ENCODE measurements at regions of chr2 and their contacts with region 1.

Region 1: DNA sequence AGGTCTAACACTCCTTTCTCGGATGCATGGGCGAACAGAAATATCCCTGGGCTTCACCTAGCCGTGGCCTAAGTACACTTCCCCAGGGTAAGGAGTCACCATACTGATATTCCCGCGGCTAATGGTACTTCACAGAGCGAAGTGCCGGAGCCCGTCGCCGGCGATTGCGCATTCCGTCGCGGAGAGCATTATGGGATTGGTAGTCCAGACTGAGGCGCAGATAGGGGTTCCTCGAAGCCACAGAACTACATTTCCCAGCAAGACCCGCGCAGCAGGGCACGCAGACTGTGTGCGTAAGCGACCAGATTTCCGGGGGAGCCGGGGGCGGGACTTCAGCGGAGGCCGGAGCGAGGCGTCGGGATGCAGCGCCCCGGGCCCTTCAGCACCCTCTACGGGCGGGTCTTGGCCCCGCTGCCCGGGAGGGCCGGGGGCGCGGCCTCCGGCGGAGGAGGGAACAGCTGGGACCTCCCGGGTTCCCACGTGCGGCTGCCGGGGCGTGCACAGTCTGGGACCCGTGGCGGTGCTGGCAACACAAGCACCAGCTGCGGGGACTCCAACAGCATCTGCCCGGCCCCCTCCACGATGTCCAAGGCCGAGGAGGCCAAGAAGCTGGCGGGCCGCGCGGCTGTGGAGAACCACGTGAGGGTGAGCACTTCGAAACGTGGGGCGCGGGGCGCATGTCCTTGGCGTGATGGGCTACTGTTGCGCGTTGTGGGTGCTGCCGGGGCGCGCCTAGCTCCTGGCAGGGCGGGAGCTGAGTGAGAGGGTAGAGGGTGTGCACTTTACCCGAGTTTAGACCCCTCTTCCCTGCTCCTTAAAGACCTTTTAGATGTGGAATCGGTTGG is at the start of gene RPIA:
- DNase-seq: peak; percentile 99
- H3K4me3 ChIP-seq: peak within 1 kb of the TSS; percentile 44 to 83 (median 73)
- H3K27ac ChIP-seq: peak within 1 kb of the TSS; percentile 59
- H3K4me1 ChIP-seq: peaks cover 13% of the 10 kb centered on the region
- H3K27me3 ChIP-seq: no peaks in the 10 kb centered on the region
- CTCF ChIP-seq: peak; percentile 71 to 76
- POLR2A ChIP-seq: peak; percentile 61
- total RNA-seq, gene RPIA: 29.8 and 30.3 TPM in 2 replicates

Region 2: DNA sequence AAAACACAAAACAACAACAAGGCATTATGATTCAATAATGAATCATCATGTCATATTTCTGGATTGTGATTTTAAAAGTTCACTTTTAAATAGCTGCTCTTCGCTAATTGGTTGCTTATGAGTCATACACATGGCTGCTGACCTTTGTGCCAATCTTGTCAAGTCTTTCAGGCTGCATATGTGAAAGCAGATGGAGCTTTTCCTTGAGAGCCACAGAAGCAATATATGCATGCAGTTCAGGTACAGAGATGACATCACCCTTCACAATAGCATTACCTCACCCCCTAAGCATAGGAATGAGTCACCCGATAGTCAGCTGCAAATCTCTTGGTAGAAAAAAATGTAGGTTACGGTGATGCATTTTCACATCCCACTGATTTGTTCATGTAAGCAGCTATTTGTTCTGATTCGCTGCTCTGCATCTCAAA is 91.5 kb before region 1 on chr2:
- CTCF ChIA-PET with region 1: interaction called, 5 read pairs
- POLR2A ChIA-PET with region 1: no interaction called
- dilution Hi-C with region 1: no loop called
- intact Hi-C with region 1: loop called (anchors 1 kb)
- DNase-seq: peak; percentile 99
- H3K4me3 ChIP-seq: no peak overlapping the region
- H3K27ac ChIP-seq: peak overlapping the region; percentile 84
- H3K4me1 ChIP-seq: peaks cover 35% of the 10 kb centered on the region
- H3K27me3 ChIP-seq: no peaks in the 10 kb centered on the region
- CTCF ChIP-seq: no peak
- POLR2A ChIP-seq: no peak

Region 3: GRCh38 chr2:88651660-88652059 is 39.9 kb before region 1 on chr2:
- CTCF ChIA-PET with region 1: no interaction called
- POLR2A ChIA-PET with region 1: no interaction called
- dilution Hi-C with region 1: no loop called
- intact Hi-C with region 1: no loop called
- DNase-seq: no peak
- H3K4me3 ChIP-seq: no peak overlapping the region
- H3K27ac ChIP-seq: no peak overlapping the region
- H3K4me1 ChIP-seq: no peaks in the 10 kb centered on the region
- H3K27me3 ChIP-seq: no peaks in the 10 kb centered on the region
- CTCF ChIP-seq: no peak
- POLR2A ChIP-seq: no peak